Ascending aorta (tissue), 2 donors: ENCODE measurements at regions of chr4 and their contacts with region 1.

Region 1: GRCh38 chr4:158079661-158080060 is 93.2 kb downstream of the GASK1B start:
- DNase-seq: no peak
- H3K4me3 ChIP-seq: no peak overlapping the region
- H3K27ac ChIP-seq: no peak overlapping the region
- H3K4me1 ChIP-seq: peaks cover 0 to 4% of the 10 kb centered on the region in 2 donors
- H3K27me3 ChIP-seq: no peaks in the 10 kb centered on the region
- CTCF ChIP-seq: no peak

Region 2: GRCh38 chr4:158033416-158034120 is 46.1 kb before region 1 on chr4:
- intact Hi-C with region 1: no loop called
- DNase-seq: no peak
- H3K4me3 ChIP-seq: no peak overlapping the region
- H3K27ac ChIP-seq: peak overlapping the region; percentile 31 to 67
- H3K4me1 ChIP-seq: no peaks in the 10 kb centered on the region
- H3K27me3 ChIP-seq: no peaks in the 10 kb centered on the region
- CTCF ChIP-seq: no peak

Region 3: DNA sequence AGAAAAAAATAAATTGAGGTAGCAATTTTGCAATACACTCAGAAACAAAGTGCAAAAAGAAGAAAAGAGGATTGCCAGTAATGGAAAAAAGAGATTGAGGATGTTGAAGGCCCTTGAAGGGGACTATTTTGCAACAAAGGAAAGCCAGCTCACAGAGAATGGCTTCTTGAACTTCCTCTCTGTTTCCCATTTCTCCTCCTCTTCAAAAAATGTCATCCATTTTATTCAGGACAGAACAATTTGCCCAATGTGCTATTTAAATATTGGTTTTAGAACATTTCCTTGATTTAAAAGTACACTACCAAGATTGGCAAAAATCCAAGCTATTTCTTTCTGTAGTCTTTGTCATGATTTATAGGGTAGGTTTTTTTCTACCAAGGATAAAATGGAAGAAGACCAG is 33.0 kb after region 1 on chr4:
- intact Hi-C with region 1: loop called (anchors 5 kb)
- DNase-seq: no peak
- H3K4me3 ChIP-seq: no peak overlapping the region
- H3K27ac ChIP-seq: no peak overlapping the region
- H3K4me1 ChIP-seq: peaks cover 0 to 3% of the 10 kb centered on the region in 2 donors
- H3K27me3 ChIP-seq: no peaks in the 10 kb centered on the region
- CTCF ChIP-seq: no peak